ENCODE measurements at regions of chr16 and their contacts with region 1.

Region 1: GRCh38 chr16:31458844-31459721 is at the start of gene ARMC5:
- DNase-seq: peak in 7 of 9 donors; percentile 92 to 99 (median 98)
- ATAC-seq: peak; percentile 81
- H3K4me3 ChIP-seq: peak within 1 kb of the TSS; percentile 87
- H3K4me3 Mint-ChIP-seq: peak within 1 kb of the TSS; percentile 88 to 96 (median 94)
- H3K27ac ChIP-seq: peak within 1 kb of the TSS; percentile 95
- H3K27ac Mint-ChIP-seq: peak within 1 kb of the TSS; percentile 94 to 99 (median 98)
- H3K4me1 ChIP-seq: peaks cover 32 to 37% of the 10 kb centered on the region in 2 donors
- H3K4me1 Mint-ChIP-seq: peaks cover 26 to 51% (median 46%) of the 10 kb centered on the region in 7 donors
- H3K27me3 ChIP-seq: no peaks in the 10 kb centered on the region
- H3K27me3 Mint-ChIP-seq: no peaks in the 10 kb centered on the region
- total RNA-seq, gene ARMC5: 8.5 to 14.4 (median 11.5) TPM

Region 2: GRCh38 chr16:30747799-30748634 is 711.1 kb before region 1 on chr16 and contains the start of gene PHKG2:
- CTCF ChIA-PET with region 1: no interaction called
- POLR2A ChIA-PET with region 1: no interaction called
- intact Hi-C with region 1: loop called in 1 of 2 experiments (anchors 2 kb)
- DNase-seq: peak; percentile 82 to 95 (median 92)
- ATAC-seq: peak; percentile 99
- H3K4me3 ChIP-seq: peak within 1 kb of the TSS; percentile 51
- H3K4me3 Mint-ChIP-seq: peak within 1 kb of the TSS; percentile 78 to 98 (median 90)
- H3K27ac ChIP-seq: peak within 1 kb of the TSS; percentile 75
- H3K27ac Mint-ChIP-seq: peak within 1 kb of the TSS; percentile 82 to 95 (median 90)
- H3K4me1 ChIP-seq: peaks cover 4 to 6% of the 10 kb centered on the region in 2 donors
- H3K4me1 Mint-ChIP-seq: peaks cover 18 to 29% (median 27%) of the 10 kb centered on the region in 7 donors
- H3K27me3 ChIP-seq: no peaks in the 10 kb centered on the region
- H3K27me3 Mint-ChIP-seq: no peaks in the 10 kb centered on the region
- total RNA-seq, gene PHKG2: 33.2 to 57.8 (median 46.7) TPM

Region 3: GRCh38 chr16:30957456-30958174 is 501.5 kb before region 1 on chr16 and contains the start of gene SETD1A:
- CTCF ChIA-PET with region 1: interaction called, 3 read pairs
- POLR2A ChIA-PET with region 1: interaction called, 4 read pairs
- intact Hi-C with region 1: loop called in 1 of 2 experiments (anchors 1 kb)
- DNase-seq: peak; percentile 94 to 99 (median 97)
- ATAC-seq: peak; percentile 93
- H3K4me3 ChIP-seq: peak within 1 kb of the TSS; percentile 100
- H3K4me3 Mint-ChIP-seq: peak within 1 kb of the TSS; percentile 81 to 97 (median 96)
- H3K27ac ChIP-seq: peak within 1 kb of the TSS; percentile 93
- H3K27ac Mint-ChIP-seq: peak within 1 kb of the TSS; percentile 97 to 100 (median 98)
- H3K4me1 ChIP-seq: peaks cover 16 to 22% of the 10 kb centered on the region in 2 donors
- H3K4me1 Mint-ChIP-seq: peaks cover 23 to 46% (median 29%) of the 10 kb centered on the region in 7 donors
- H3K27me3 ChIP-seq: no peaks in the 10 kb centered on the region
- H3K27me3 Mint-ChIP-seq: peaks cover 0 to 3% (median 0%) of the 10 kb centered on the region in 5 donors
- total RNA-seq, gene SETD1A: 27.0 to 47.2 (median 36.8) TPM

Region 4: GRCh38 chr16:31108035-31108793 is 350.9 kb before region 1 on chr16 and contains the start of gene BCKDK:
- CTCF ChIA-PET with region 1: no interaction called
- POLR2A ChIA-PET with region 1: no interaction called
- intact Hi-C with region 1: loop called (anchors 2 kb)
- DNase-seq: peak; percentile 31 to 84 (median 39)
- ATAC-seq: peak; percentile 82
- H3K4me3 ChIP-seq: peak within 1 kb of the TSS; percentile 74
- H3K4me3 Mint-ChIP-seq: peak within 1 kb of the TSS; percentile 77 to 91 (median 85)
- H3K27ac ChIP-seq: peak within 1 kb of the TSS; percentile 82
- H3K27ac Mint-ChIP-seq: peak within 1 kb of the TSS; percentile 58 to 88 (median 84)
- H3K4me1 ChIP-seq: peaks cover 4 to 16% of the 10 kb centered on the region in 2 donors
- H3K4me1 Mint-ChIP-seq: peaks cover 10 to 32% (median 19%) of the 10 kb centered on the region in 7 donors
- H3K27me3 ChIP-seq: no peaks in the 10 kb centered on the region
- H3K27me3 Mint-ChIP-seq: no peaks in the 10 kb centered on the region
- total RNA-seq, gene BCKDK: 10.3 to 30.8 (median 20.8) TPM

Region 5: DNA sequence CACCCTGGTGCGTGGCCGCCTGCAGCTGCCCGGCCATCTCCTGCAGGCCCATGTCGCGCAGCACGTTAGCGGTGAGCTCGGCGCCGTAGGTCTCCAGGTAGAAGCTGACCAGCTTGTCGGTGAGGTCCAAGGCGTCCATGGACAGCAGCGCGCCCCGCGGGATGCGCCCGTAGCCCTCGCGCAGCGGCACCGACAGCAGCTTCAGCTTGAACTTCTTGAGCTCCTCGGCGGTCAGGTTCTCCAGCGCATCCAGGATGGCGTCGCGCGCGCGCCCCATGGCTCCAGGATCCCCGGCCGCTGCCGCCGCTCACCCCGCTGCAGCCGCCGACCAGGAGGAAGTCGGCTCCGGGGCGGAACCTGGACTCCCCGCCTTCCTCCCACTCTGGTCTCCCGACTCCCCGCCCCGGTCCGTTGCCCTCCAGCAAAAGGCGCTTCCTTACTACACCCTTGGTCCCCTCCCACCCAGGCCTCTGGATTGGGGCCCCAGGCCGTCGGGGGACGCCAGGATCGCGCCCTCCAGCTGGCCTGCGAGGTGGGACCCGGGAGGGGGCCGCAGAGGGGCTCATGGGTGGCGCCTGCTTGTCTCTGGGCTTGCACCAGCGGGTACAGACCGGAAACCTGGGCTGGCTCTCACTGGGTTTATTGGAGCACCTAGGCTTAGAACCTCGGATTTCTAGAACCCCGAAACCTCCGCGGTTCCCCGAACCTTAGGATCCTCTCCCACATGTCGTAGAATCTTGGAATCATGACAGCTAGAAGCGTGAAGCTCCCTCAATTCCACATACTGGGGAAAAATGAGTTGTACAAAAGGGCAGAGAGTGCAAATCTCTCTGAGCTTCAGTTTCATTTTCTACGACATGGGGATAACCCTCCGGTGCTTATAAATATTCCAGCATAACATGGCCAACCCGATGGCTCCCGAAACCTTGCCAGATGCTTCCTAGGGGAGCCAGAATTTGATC is 256.4 kb before region 1 on chr16 and contains the start of gene PYCARD:
- CTCF ChIA-PET with region 1: no interaction called
- POLR2A ChIA-PET with region 1: no interaction called
- intact Hi-C with region 1: loop called in 1 of 2 experiments (anchors 5 kb)
- DNase-seq: peak in 6 of 9 donors; percentile 28 to 56 (median 38)
- ATAC-seq: peak; percentile 44
- H3K4me3 ChIP-seq: peak within 1 kb of the TSS; percentile 87
- H3K4me3 Mint-ChIP-seq: peak within 1 kb of the TSS; percentile 71 to 93 (median 90)
- H3K27ac ChIP-seq: peak within 1 kb of the TSS; percentile 73
- H3K27ac Mint-ChIP-seq: peak within 1 kb of the TSS; percentile 68 to 88 (median 85)
- H3K4me1 ChIP-seq: peaks cover 19 to 20% of the 10 kb centered on the region in 2 donors
- H3K4me1 Mint-ChIP-seq: peaks cover 33 to 56% (median 46%) of the 10 kb centered on the region in 7 donors
- H3K27me3 ChIP-seq: no peaks in the 10 kb centered on the region
- H3K27me3 Mint-ChIP-seq: peaks cover 0 to 7% (median 0%) of the 10 kb centered on the region in 5 donors
- total RNA-seq, gene PYCARD: 13.0 to 80.1 (median 21.2) TPM

Region 6: GRCh38 chr16:31507929-31508705 is 49.0 kb after region 1 on chr16 and contains the start of gene RUSF1:
- CTCF ChIA-PET with region 1: interaction called, 3 read pairs
- POLR2A ChIA-PET with region 1: interaction called, 22 read pairs
- intact Hi-C with region 1: loop called (anchors 1 kb)
- DNase-seq: peak; percentile 63 to 84 (median 77)
- ATAC-seq: peak; percentile 93
- H3K4me3 ChIP-seq: peak within 1 kb of the TSS; percentile 77
- H3K4me3 Mint-ChIP-seq: peak within 1 kb of the TSS; percentile 83 to 98 (median 92)
- H3K27ac ChIP-seq: peak within 1 kb of the TSS; percentile 93
- H3K27ac Mint-ChIP-seq: peak within 1 kb of the TSS; percentile 93 to 98 (median 97)
- H3K4me1 ChIP-seq: peaks cover 27% of the 10 kb centered on the region in 2 donors
- H3K4me1 Mint-ChIP-seq: peaks cover 30 to 66% (median 53%) of the 10 kb centered on the region in 7 donors
- H3K27me3 ChIP-seq: no peaks in the 10 kb centered on the region
- H3K27me3 Mint-ChIP-seq: no peaks in the 10 kb centered on the region
- total RNA-seq, gene RUSF1: 47.3 to 118 (median 89.5) TPM

Region 7: GRCh38 chr16:31868691-31869167 is 409.6 kb after region 1 on chr16:
- CTCF ChIA-PET with region 1: interaction called, 5 read pairs
- POLR2A ChIA-PET with region 1: interaction called, 9 read pairs
- intact Hi-C with region 1: loop called (anchors 1 kb)
- DNase-seq: peak; percentile 62 to 81 (median 74)
- ATAC-seq: peak; percentile 20
- H3K4me3 ChIP-seq: peak overlapping the region; percentile 42
- H3K4me3 Mint-ChIP-seq: peak overlapping the region; percentile 67 to 86 (median 74)
- H3K27ac ChIP-seq: peak overlapping the region; percentile 60
- H3K27ac Mint-ChIP-seq: peak overlapping the region; percentile 8 to 95 (median 85)
- H3K4me1 ChIP-seq: peaks cover 32 to 36% of the 10 kb centered on the region in 2 donors
- H3K4me1 Mint-ChIP-seq: peaks cover 27 to 65% (median 50%) of the 10 kb centered on the region in 7 donors
- H3K27me3 ChIP-seq: no peaks in the 10 kb centered on the region
- H3K27me3 Mint-ChIP-seq: peaks cover 0 to 5% (median 0%) of the 10 kb centered on the region in 5 donors